Endothelial cell of umbilical vein (primary cell): ENCODE measurements at regions of chr1 and their contacts with region 1.

Region 1: DNA sequence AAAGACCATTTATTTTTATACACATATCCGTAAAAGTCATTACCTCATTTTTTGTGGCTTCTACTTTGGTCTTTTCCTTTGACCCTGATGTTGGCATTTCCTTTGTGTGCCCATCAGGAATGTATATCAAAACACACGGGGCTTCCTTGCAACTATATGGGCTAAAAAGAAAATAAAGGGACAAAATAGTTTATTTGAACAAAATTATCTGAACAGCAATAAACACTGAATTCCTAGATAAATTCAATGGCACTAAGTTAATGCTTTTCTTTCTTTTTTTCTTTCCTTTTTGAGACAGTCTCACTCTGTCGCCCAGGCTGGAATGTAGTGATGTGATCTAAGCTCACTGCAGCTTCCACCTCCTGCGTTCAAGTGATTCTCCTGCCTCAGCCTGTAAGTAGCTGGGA is 45.2 kb downstream of the EPRS1 start:
- DNase-seq: peak; percentile 76
- H3K4me3 ChIP-seq: peak overlapping the region in 1 of 3 experiments; percentile 1
- H3K27ac ChIP-seq: peak overlapping the region; percentile 79
- H3K4me1 ChIP-seq: peaks cover 21% of the 10 kb centered on the region
- H3K27me3 ChIP-seq: no peaks in the 10 kb centered on the region
- CTCF ChIP-seq: no peak
- POLR2A ChIP-seq: no peak

Region 2: DNA sequence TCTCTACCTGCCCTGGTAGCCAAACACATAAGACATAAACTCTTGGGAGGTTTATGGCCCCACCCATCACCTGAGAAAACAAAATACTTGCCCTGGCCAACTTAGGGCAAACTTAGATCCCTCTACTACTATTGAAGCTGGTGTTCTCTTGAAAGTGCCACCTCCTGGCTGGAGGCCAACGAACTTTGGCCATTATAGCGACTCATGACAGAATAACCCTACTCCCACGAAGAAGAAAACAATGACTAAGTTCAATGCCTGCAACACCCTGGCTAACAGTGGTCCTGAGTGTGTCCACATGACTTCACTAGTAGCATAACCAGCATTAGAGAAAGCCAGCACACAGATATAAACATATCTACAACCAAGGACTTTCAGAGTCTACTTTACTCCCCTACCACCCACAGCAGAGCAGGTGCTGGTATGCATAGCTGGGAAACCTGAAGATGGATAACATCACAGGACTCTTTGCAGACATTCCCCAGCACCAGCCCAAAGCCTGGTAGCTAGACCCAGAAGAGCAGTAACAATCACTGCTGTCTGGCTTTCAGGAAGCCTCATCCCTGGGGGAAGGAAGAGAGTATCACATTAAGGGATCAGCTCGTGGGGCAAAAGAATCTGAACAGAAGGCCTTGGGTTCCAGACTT is 153.8 kb before region 1 on chr1:
- CTCF ChIA-PET with region 1: no interaction called
- POLR2A ChIA-PET with region 1: no interaction called
- dilution Hi-C with region 1: no loop called
- intact Hi-C with region 1: no loop called
- DNase-seq: no peak
- H3K4me3 ChIP-seq: no peak overlapping the region
- H3K27ac ChIP-seq: no peak overlapping the region
- H3K4me1 ChIP-seq: no peaks in the 10 kb centered on the region
- H3K27me3 ChIP-seq: no peaks in the 10 kb centered on the region
- CTCF ChIP-seq: no peak
- POLR2A ChIP-seq: no peak

Region 3: GRCh38 chr1:220046052-220046930 is 45.2 kb after region 1 on chr1 and contains the start of gene EPRS1:
- CTCF ChIA-PET with region 1: interaction called, 4 read pairs
- POLR2A ChIA-PET with region 1: no interaction called
- dilution Hi-C with region 1: no loop called
- intact Hi-C with region 1: loop called (anchors 1 kb)
- DNase-seq: peak; percentile 99
- H3K4me3 ChIP-seq: peak within 1 kb of the TSS; percentile 79 to 98 (median 86)
- H3K27ac ChIP-seq: peak within 1 kb of the TSS; percentile 1
- H3K4me1 ChIP-seq: peaks cover 10% of the 10 kb centered on the region
- H3K27me3 ChIP-seq: no peaks in the 10 kb centered on the region
- CTCF ChIP-seq: peak; percentile 61 to 86
- POLR2A ChIP-seq: peak; percentile 91
- total RNA-seq, gene EPRS1: 103 and 109 TPM in 2 replicates